Right lobe of liver (tissue), 6 donors: ENCODE measurements at regions of chr6 and their contacts with region 1.

Region 1: GRCh38 chr6:33771146-33772081 is 17.5 kb downstream of the LEMD2 start:
- DNase-seq: peak; percentile 64 to 75 (median 74)
- ATAC-seq: peak; percentile 80 to 92 (median 84)
- H3K4me3 ChIP-seq: no peak overlapping the region
- H3K27ac ChIP-seq: peak overlapping the region in 2 of 3 donors; percentile 40 to 52
- H3K4me1 ChIP-seq: peaks cover 0 to 3% (median 0%) of the 10 kb centered on the region in 4 donors
- H3K27me3 ChIP-seq: no peaks in the 10 kb centered on the region
- CTCF ChIP-seq: peak; percentile 88 to 99 (median 96)
- POLR2A ChIP-seq: no peak

Region 2: GRCh38 chr6:33579828-33580714 is 191.3 kb before region 1 on chr6 and contains the start of gene BAK1:
- intact Hi-C with region 1: loop called in 1 of 2 experiments (anchors 10 kb)
- DNase-seq: peak; percentile 86 to 91 (median 91)
- ATAC-seq: peak; percentile 94 to 97 (median 95)
- H3K4me3 ChIP-seq: peak within 1 kb of the TSS; percentile 81 to 84 (median 82)
- H3K27ac ChIP-seq: peak within 1 kb of the TSS; percentile 64 to 83 (median 73)
- H3K4me1 ChIP-seq: peaks cover 0 to 9% (median 0%) of the 10 kb centered on the region in 4 donors
- H3K27me3 ChIP-seq: no peaks in the 10 kb centered on the region
- CTCF ChIP-seq: peak; percentile 39 to 68 (median 56)
- POLR2A ChIP-seq: peak; percentile 80
- total RNA-seq, gene BAK1: 4.4 to 11.4 (median 6.5) TPM

Region 3: DNA sequence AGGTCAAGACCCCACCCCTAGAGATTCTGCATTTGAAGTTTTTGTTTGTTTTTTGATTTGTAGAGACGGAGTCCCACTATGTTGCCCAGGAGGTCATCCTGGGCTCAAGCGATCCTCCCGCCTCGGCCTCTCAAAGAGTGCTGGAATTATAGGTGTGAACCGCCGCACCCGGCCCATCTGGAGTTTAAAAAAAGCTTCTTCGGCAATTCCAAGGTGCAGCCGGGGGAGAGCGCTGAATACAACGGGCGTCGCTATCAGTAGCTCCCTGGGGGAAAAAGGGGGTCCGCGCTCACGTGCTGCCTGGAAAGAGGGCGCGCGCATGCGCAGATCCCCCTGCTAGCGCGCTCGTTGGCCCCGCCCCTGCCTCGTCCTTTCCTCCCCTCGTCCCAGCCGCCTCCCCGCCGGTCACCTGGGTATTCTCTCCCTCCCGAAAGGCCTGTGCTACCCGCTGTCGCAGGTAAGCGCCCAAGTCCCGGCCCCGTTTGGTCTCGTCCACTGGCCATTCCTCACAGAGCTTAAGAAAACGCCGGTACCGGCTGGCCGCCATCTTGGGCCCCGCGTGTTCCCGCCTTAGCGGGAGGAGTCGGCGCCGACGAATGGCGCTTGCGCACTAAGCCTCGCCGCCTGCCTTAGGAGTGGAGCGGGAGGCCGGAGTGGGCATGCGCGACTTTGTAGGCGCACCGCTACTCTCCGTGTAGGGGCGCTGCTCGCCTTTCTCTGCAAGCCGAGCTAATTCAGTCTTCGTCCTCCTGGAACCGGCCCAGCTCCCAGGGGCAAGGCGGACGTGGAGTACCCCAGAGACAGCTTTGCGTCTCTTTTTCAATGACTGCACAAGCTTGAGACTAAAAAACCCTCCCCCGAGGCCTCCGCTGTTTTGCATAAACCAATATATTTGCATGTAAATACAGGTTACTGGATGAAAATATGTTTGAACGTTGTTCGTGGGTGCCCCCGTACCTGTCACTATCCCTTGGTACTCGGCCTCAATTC is 60.0 kb before region 1 on chr6 and contains the start of gene UQCC2:
- intact Hi-C with region 1: loop called in 1 of 2 experiments (anchors 10 kb)
- DNase-seq: peak; percentile 98 to 99 (median 99)
- ATAC-seq: peak; percentile 96 to 99 (median 98)
- H3K4me3 ChIP-seq: peak within 1 kb of the TSS; percentile 61 to 89 (median 68)
- H3K27ac ChIP-seq: peak within 1 kb of the TSS; percentile 25 to 75 (median 75)
- H3K4me1 ChIP-seq: peaks cover 0 to 17% (median under 1%) of the 10 kb centered on the region in 4 donors
- H3K27me3 ChIP-seq: no peaks in the 10 kb centered on the region
- CTCF ChIP-seq: peak; percentile 60 to 87 (median 78)
- POLR2A ChIP-seq: peak; percentile 70
- total RNA-seq, gene UQCC2: 23.7 to 38.4 (median 31.5) TPM

Region 4: GRCh38 chr6:34027445-34027936 is 256.1 kb after region 1 on chr6:
- intact Hi-C with region 1: loop called (anchors 5 kb)
- DNase-seq: peak; percentile 53 to 67 (median 62)
- ATAC-seq: peak; percentile 66 to 85 (median 78)
- H3K4me3 ChIP-seq: no peak overlapping the region
- H3K27ac ChIP-seq: no peak overlapping the region
- H3K4me1 ChIP-seq: no peaks in the 10 kb centered on the region
- H3K27me3 ChIP-seq: no peaks in the 10 kb centered on the region
- CTCF ChIP-seq: peak; percentile 87 to 91 (median 89)
- POLR2A ChIP-seq: no peak

Region 5: DNA sequence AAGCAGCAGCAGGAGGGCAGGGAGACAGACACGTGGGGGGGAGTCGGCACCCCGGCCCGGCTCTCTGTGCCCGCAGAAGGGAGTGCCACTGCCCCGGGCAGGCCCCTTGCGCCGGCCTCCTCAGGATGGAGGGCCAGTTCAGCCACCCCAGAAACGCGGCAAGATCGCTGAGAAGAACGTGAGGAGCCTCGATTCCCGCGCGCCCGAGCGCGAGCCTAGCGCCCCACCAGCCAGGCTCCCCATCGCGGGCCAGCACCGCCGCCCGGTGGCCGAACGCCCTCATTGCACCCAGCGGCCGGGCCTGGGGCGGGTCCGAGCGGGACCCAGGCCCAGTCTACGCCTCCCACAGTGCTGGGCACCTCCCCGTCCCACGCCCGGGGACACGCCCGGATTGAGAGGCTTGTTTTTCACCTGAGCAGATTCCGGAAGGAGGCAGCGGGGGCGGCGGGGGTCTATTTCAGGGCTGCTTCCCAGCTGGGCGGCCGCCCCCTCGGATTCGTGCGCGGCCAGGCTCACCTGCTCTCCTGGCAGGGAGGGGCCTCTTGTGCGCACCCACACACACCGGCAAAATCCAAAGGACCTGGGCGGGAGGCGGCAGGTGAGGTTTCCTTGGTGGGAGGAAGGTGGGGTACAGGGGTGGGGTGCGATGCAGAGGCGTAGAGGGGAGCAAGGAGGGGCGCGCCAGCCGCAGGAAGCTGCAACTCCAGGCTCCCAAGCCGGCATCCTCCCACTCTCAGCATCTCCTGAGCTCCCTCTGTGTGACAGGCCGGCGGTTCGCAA is 383.4 kb after region 1 on chr6:
- intact Hi-C with region 1: loop called (anchors 5 to 10 kb)
- DNase-seq: peak in 1 of 3 donors; percentile 49
- ATAC-seq: peak; percentile 71 to 89 (median 83)
- H3K4me3 ChIP-seq: no peak overlapping the region
- H3K27ac ChIP-seq: no peak overlapping the region
- H3K4me1 ChIP-seq: no peaks in the 10 kb centered on the region
- H3K27me3 ChIP-seq: peaks cover 0 to 9% of the 10 kb centered on the region in 2 donors
- CTCF ChIP-seq: peak; percentile 81 to 94 (median 93)
- POLR2A ChIP-seq: no peak